Colonic mucosa (tissue), 4 donors: ENCODE measurements at regions of chr3 and their contacts with region 1.

Region 1: GRCh38 chr3:59049671-59050331 is at the start of gene CFAP20DC:
- DNase-seq: peak; percentile 91
- H3K4me3 ChIP-seq: peak within 1 kb of the TSS; percentile 55
- H3K27ac ChIP-seq: no peak within 1 kb of the TSS
- H3K4me1 ChIP-seq: no peaks in the 10 kb centered on the region
- H3K27me3 ChIP-seq: no peaks in the 10 kb centered on the region
- CTCF ChIP-seq: no peak
- total RNA-seq, gene CFAP20DC: 1.7 to 1.8 TPM

Region 2: DNA sequence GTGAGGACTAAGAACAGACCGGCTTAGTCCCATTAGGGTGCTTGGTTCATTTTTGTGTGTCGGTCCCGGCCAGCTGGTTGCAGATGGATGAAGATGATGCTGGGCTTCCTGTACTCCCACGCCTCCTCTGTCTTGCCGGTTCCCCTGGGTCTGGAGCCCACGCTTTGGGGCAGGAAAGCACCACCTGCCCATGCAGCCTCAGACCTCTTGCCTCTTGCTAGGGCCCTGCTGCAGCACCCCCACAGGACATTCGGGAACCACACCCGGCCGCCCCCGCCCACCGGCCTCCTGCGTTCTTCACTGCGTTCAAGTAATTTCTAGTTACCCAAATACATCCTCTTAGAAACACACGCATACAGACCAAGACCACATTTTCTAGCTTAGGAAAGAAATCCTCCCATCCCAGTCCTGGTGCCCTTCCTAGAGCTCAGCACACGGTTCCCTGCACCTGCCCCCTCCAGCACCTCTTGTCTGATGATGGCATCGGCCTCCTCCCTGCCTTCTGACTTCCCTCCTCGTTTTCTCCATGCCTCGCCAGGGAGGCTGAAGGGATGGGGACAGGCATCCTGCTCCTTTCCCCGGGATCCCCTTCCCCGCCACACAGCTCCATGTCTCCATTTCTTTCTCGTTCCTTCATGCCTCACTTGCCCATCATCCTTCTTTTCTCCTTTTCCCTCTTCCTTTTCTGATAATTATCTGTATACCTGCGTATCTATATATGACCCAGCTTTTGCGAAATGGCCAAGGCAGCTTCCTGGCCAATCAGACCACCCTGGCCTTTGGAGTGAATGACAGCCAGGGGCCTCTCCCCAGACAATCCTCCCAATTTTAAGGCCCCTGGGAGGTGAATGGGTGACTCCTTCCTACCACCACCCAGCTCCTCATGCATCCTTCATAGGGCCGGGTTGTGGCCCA is 414.2 kb before region 1 on chr3:
- intact Hi-C with region 1: loop called (anchors 5 kb)
- DNase-seq: no peak
- H3K4me3 ChIP-seq: no peak overlapping the region
- H3K27ac ChIP-seq: no peak overlapping the region
- H3K4me1 ChIP-seq: no peaks in the 10 kb centered on the region
- H3K27me3 ChIP-seq: no peaks in the 10 kb centered on the region
- CTCF ChIP-seq: no peak

Region 3: DNA sequence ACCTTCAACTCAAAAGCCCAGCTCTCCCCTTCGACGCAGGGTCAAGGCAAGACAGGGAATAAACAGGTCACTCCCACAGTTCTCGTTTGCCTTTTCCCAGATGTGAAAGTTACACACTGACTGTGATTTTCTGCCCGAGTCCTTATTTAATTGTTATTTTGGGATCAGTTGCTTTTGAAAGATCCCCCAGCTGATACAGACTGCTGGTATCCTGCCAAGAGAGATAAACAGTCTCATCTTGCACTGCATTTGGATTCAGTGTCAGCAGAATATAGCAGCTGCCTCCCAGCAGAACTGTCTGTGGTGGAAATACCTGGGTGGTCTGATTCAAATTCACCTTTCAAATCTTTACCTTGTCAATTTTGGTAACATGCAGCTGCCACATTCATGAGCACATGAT is 327.2 kb before region 1 on chr3:
- intact Hi-C with region 1: no loop called
- DNase-seq: no peak
- H3K4me3 ChIP-seq: no peak overlapping the region
- H3K27ac ChIP-seq: no peak overlapping the region
- H3K4me1 ChIP-seq: no peaks in the 10 kb centered on the region
- H3K27me3 ChIP-seq: no peaks in the 10 kb centered on the region
- CTCF ChIP-seq: no peak

Region 4: GRCh38 chr3:58776231-58776630 is 273.6 kb before region 1 on chr3:
- intact Hi-C with region 1: no loop called
- DNase-seq: no peak
- H3K4me3 ChIP-seq: no peak overlapping the region
- H3K27ac ChIP-seq: no peak overlapping the region
- H3K4me1 ChIP-seq: no peaks in the 10 kb centered on the region
- H3K27me3 ChIP-seq: no peaks in the 10 kb centered on the region
- CTCF ChIP-seq: no peak

Region 5: DNA sequence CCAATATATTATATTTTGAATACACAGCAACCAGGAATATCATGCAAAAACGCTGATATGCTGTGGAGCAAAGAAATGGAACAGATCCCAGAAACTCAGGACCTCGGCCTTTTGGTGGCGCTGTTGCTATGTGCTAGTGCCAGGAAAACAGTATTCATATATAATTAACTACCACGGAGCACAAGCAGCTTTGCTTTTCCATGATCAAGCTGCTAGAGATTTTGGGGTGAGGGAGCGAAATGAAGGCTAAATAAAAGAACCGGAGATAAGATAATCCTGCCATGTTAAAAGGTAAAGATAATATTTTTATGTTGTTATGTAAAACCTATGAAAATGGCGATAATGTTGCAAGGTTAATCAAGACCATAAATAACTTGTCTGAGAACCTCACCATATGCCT is 225.5 kb before region 1 on chr3:
- intact Hi-C with region 1: loop called (anchors 10 kb)
- DNase-seq: peak; percentile 85
- H3K4me3 ChIP-seq: no peak overlapping the region
- H3K27ac ChIP-seq: no peak overlapping the region
- H3K4me1 ChIP-seq: no peaks in the 10 kb centered on the region
- H3K27me3 ChIP-seq: no peaks in the 10 kb centered on the region
- CTCF ChIP-seq: peak; percentile 56